ENCODE measurements at regions of chr5 and their contacts with region 1.

Region 1: GRCh38 chr5:180315762-180316212 is 23.9 kb upstream of the MAPK9 start:
- DNase-seq: peak; percentile 72
- ATAC-seq: peak; percentile 74
- H3K4me3 Mint-ChIP-seq: no peak overlapping the region
- H3K27ac Mint-ChIP-seq: no peak overlapping the region
- H3K4me1 Mint-ChIP-seq: no peaks in the 10 kb centered on the region
- H3K27me3 Mint-ChIP-seq: no peaks in the 10 kb centered on the region

Region 2: DNA sequence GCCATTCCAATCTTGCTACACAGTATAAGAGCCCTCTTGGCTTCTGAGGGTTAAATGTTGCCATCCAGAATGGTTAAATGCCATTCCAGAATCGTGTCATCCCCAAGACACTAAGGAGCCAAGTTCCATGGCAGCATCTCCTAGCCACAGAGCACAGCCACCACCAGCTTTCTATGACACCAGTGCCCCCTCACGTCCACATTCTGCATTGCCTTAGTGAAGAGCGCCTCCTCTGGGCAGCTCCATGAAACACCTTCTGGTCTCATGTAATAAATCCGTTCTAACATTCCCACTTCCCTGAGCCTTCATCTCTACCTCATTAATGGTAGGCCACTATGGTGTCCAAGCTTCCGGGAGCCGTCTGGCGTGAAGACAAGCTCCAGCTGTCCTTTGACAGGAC is 647.4 kb before region 1 on chr5:
- CTCF ChIA-PET with region 1: no interaction called
- POLR2A ChIA-PET with region 1: no interaction called
- DNase-seq: peak; percentile 43
- ATAC-seq: peak; percentile 74
- H3K4me3 Mint-ChIP-seq: no peak overlapping the region
- H3K27ac Mint-ChIP-seq: peak overlapping the region; percentile 13
- H3K4me1 Mint-ChIP-seq: no peaks in the 10 kb centered on the region
- H3K27me3 Mint-ChIP-seq: no peaks in the 10 kb centered on the region

Region 3: GRCh38 chr5:180304431-180305375 is 11.1 kb before region 1 on chr5:
- CTCF ChIA-PET with region 1: interaction called, 13 read pairs
- POLR2A ChIA-PET with region 1: no interaction called
- DNase-seq: no peak
- ATAC-seq: no peak
- H3K4me3 Mint-ChIP-seq: no peak overlapping the region
- H3K27ac Mint-ChIP-seq: no peak overlapping the region
- H3K4me1 Mint-ChIP-seq: no peaks in the 10 kb centered on the region
- H3K27me3 Mint-ChIP-seq: peaks cover 4% of the 10 kb centered on the region

Measured in activated CD8-positive, alpha-beta T cell treated with anti-CD3 and anti-CD28 coated beads, Interleukin-2, amount 10 ng/mL, durations not matched to agents 7 days and 5 days (primary cell).